Activated CD8-positive, alpha-beta T cell treated with anti-CD3 and anti-CD28 coated beads for 36 hours (primary cell): ENCODE measurements at regions of chr7 and their contacts with region 1.

Region 1: DNA sequence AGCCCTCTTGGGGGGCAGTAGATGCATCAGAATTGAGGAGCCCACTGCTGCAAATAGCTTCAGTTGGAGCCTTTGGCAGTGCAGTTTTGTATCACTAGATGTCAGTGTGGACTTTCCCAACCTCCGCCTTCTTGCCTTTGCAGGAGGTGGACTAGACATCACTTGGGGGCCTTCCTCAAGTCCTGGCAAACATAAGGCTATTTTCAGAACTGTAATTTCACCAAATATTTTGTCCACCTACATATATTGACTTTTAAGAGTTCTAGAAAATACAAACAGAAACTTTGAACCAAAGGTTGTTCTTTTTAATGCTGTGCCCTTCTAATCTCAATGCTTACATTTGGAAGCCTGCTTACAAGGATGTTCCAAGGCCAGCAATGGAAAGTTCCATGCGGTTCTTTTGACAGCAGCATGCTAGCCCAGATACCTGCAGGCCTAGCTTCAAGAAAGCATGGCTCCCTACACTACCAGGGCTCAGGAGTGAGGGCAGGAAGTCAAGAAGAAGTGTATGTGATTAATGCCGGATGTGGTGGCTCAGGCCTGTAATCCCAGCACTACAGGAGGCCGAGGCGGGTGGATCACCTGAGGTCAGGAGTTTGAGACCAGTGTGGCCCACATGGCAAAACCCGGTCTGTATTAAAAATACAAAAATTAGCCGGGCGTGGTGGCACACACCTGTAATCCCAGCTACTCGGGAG is 8.0 kb upstream of the ZNRF2 start:
- DNase-seq: peak; percentile 71
- ATAC-seq: peak; percentile 74
- H3K4me3 Mint-ChIP-seq: no peak overlapping the region
- H3K27ac Mint-ChIP-seq: no peak overlapping the region
- H3K4me1 Mint-ChIP-seq: peaks cover 9% of the 10 kb centered on the region
- H3K27me3 Mint-ChIP-seq: no peaks in the 10 kb centered on the region
- CTCF ChIP-seq: peak; percentile 78

Region 2: GRCh38 chr7:30080818-30081217 is 195.5 kb before region 1 on chr7:
- CTCF ChIA-PET with region 1: no interaction called
- POLR2A ChIA-PET with region 1: no interaction called
- intact Hi-C with region 1: no loop called
- DNase-seq: no peak
- ATAC-seq: no peak
- H3K4me3 Mint-ChIP-seq: no peak overlapping the region
- H3K27ac Mint-ChIP-seq: no peak overlapping the region
- H3K4me1 Mint-ChIP-seq: no peaks in the 10 kb centered on the region
- H3K27me3 Mint-ChIP-seq: no peaks in the 10 kb centered on the region
- CTCF ChIP-seq: no peak

Region 3: GRCh38 chr7:30164567-30164966 is 111.8 kb before region 1 on chr7:
- CTCF ChIA-PET with region 1: interaction called, 5 read pairs
- POLR2A ChIA-PET with region 1: no interaction called
- intact Hi-C with region 1: loop called (anchors 10 kb)
- DNase-seq: no peak
- ATAC-seq: no peak
- H3K4me3 Mint-ChIP-seq: no peak overlapping the region
- H3K27ac Mint-ChIP-seq: no peak overlapping the region
- H3K4me1 Mint-ChIP-seq: peaks cover 31% of the 10 kb centered on the region
- H3K27me3 Mint-ChIP-seq: no peaks in the 10 kb centered on the region
- CTCF ChIP-seq: peak; percentile 52

Region 4: GRCh38 chr7:30252885-30253795 is 23.2 kb before region 1 on chr7:
- CTCF ChIA-PET with region 1: no interaction called
- POLR2A ChIA-PET with region 1: no interaction called
- intact Hi-C with region 1: no loop called
- DNase-seq: peak; percentile 9
- ATAC-seq: peak; percentile 47
- H3K4me3 Mint-ChIP-seq: no peak overlapping the region
- H3K27ac Mint-ChIP-seq: no peak overlapping the region
- H3K4me1 Mint-ChIP-seq: peaks cover 12% of the 10 kb centered on the region
- H3K27me3 Mint-ChIP-seq: no peaks in the 10 kb centered on the region
- CTCF ChIP-seq: no peak

Region 5: GRCh38 chr7:30312178-30312577 is 35.8 kb after region 1 on chr7:
- CTCF ChIA-PET with region 1: no interaction called
- POLR2A ChIA-PET with region 1: no interaction called
- intact Hi-C with region 1: no loop called
- DNase-seq: no peak
- ATAC-seq: no peak
- H3K4me3 Mint-ChIP-seq: no peak overlapping the region
- H3K27ac Mint-ChIP-seq: no peak overlapping the region
- H3K4me1 Mint-ChIP-seq: peaks cover 56% of the 10 kb centered on the region
- H3K27me3 Mint-ChIP-seq: no peaks in the 10 kb centered on the region
- CTCF ChIP-seq: no peak

Region 6: GRCh38 chr7:30348083-30348560 is 71.8 kb after region 1 on chr7:
- CTCF ChIA-PET with region 1: interaction called, 96 read pairs
- POLR2A ChIA-PET with region 1: interaction called, 3 read pairs
- intact Hi-C with region 1: loop called (anchors 5 kb)
- DNase-seq: peak; percentile 62
- ATAC-seq: peak; percentile 86
- H3K4me3 Mint-ChIP-seq: peak overlapping the region; percentile 78
- H3K27ac Mint-ChIP-seq: peak overlapping the region; percentile 97
- H3K4me1 Mint-ChIP-seq: peaks cover 59% of the 10 kb centered on the region
- H3K27me3 Mint-ChIP-seq: no peaks in the 10 kb centered on the region
- CTCF ChIP-seq: no peak

Region 7: GRCh38 chr7:30363778-30364563 is 87.6 kb after region 1 on chr7:
- CTCF ChIA-PET with region 1: interaction called, 10 read pairs
- POLR2A ChIA-PET with region 1: no interaction called
- intact Hi-C with region 1: no loop called
- DNase-seq: no peak
- ATAC-seq: no peak
- H3K4me3 Mint-ChIP-seq: no peak overlapping the region
- H3K27ac Mint-ChIP-seq: no peak overlapping the region
- H3K4me1 Mint-ChIP-seq: no peaks in the 10 kb centered on the region
- H3K27me3 Mint-ChIP-seq: no peaks in the 10 kb centered on the region
- CTCF ChIP-seq: no peak

Region 8: DNA sequence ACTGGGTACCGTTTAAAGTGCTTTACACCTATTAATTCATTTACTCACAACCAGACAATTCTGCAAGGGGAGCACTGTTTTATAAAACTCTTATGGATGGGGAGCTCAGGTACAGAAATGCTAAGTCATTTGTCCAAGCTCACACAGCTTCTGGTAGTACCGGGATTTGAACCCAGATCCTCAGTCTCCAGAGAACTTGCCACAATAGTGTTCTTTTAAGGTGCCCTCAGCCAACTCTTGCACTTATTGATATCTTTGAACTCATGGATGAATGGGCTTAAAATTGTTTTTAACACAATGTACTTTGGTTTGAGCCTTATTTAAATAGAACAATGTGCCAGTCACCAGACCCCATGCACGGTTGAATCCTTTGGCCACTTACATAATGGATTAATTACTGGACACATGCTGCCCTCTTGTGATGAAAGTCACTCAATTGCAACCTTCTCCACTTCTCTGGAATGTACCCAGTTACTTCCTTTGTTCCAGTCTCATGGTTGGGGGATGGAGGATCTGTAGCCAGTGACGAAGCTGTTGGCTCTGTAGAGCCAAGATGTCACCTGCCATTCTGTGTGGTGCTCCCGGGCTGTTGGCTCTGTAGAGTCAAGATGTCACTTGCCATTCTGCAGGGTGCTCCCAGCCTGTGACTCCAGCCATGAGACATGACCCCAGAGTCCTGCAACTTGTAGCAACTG is 136.6 kb after region 1 on chr7:
- CTCF ChIA-PET with region 1: interaction called, 9 read pairs
- POLR2A ChIA-PET with region 1: no interaction called
- intact Hi-C with region 1: loop called (anchors 5 kb)
- DNase-seq: peak; percentile 10
- ATAC-seq: no peak
- H3K4me3 Mint-ChIP-seq: no peak overlapping the region
- H3K27ac Mint-ChIP-seq: no peak overlapping the region
- H3K4me1 Mint-ChIP-seq: no peaks in the 10 kb centered on the region
- H3K27me3 Mint-ChIP-seq: no peaks in the 10 kb centered on the region
- CTCF ChIP-seq: no peak

Region 9: DNA sequence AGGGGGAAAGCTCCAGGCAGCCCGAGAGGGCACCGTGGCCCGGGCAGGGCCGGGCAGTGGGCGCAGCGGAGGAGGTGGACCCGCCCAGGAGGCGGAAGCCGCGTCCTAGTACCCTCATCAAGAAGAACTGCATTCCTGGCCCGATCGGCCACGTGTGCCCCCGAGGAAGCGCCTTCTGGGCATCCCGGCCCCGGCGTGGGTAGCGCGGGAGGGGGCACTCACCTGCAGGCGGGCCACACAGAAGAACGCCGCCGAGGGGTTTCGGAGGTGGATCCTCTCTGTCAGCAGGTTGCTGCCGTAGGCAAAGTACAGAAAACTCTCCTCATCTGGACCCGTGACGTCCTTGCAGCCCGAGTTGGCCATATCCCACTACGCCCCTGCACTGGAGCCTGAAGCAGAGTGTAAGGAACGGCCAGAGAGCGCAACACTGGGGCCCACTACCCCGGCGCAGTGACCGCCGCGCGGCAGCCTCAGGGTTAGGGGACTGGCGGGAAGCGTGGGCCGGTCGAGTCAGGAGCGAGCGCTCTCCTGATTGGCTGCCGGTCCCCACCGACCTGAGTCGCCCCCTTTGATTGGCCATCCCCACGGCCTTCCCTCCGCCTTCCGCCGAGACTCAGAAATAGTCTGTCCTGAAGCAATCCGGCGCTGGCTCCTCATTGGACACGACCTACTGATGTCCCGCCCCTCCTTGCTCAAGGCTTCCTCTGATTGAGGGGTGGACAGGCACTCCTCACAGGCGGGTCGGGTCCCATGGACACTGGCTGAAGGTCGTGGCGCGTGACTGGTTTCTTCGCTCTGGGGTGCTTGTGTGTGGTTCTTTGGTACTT is 228.2 kb after region 1 on chr7 and contains the start of gene GGCT:
- CTCF ChIA-PET with region 1: interaction called, 4 read pairs
- POLR2A ChIA-PET with region 1: no interaction called
- intact Hi-C with region 1: loop called (anchors 10 kb)
- DNase-seq: peak; percentile 99
- ATAC-seq: peak; percentile 99
- H3K4me3 Mint-ChIP-seq: peak within 1 kb of the TSS; percentile 80
- H3K27ac Mint-ChIP-seq: peak within 1 kb of the TSS; percentile 89
- H3K4me1 Mint-ChIP-seq: peaks cover 46% of the 10 kb centered on the region
- H3K27me3 Mint-ChIP-seq: no peaks in the 10 kb centered on the region
- CTCF ChIP-seq: no peak
- total RNA-seq, gene GGCT: 78.6 to 78.7 TPM

Region 10: DNA sequence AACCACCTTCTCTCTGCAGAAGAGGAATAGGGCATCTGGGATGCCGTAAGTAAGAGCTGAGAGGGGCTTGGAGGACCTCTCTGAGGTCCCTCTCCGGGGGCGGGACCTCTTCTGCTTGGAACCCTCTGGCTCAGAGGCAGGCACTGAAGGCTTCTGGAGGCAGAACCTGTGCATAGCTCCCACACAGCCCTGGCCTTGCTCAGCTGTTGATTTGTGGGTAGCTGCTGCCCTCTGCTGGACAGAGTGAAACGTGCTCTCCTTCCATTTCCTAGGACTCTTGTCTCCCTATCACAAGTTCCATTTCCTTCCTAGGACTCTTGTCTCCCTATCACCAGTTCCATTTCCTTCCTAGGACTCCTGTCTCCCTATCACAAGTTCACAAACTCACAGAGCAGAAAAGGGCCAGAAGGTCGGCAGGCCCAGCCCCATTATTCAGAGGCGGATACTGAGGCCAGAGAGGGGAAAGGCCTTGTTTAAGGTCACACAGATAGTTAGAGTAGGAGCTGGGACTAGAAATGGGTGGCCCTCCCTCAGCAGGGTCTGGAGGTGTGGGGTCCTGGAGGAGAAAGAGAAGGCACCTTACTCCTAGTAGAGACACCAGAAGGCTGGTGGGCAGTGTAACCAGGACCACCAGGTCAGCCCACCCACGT is 288.0 kb after region 1 on chr7:
- CTCF ChIA-PET with region 1: interaction called, 45 read pairs
- POLR2A ChIA-PET with region 1: no interaction called
- intact Hi-C with region 1: loop called (anchors 5 kb)
- DNase-seq: peak; percentile 82
- ATAC-seq: peak; percentile 96
- H3K4me3 Mint-ChIP-seq: no peak overlapping the region
- H3K27ac Mint-ChIP-seq: no peak overlapping the region
- H3K4me1 Mint-ChIP-seq: peaks cover 2% of the 10 kb centered on the region
- H3K27me3 Mint-ChIP-seq: no peaks in the 10 kb centered on the region
- CTCF ChIP-seq: peak; percentile 90